PC-3 (cell line): ENCODE measurements at regions of chr5 and their contacts with region 1.

Region 1: GRCh38 chr5:91101600-91102379 is 281.3 kb downstream of the ARRDC3 start:
- DNase-seq: peak; percentile 83
- ATAC-seq: peak; percentile 99
- H3K4me3 ChIP-seq: peak overlapping the region; percentile 30; the same call in 1 of the 2 replicates
- H3K27ac ChIP-seq: no peak overlapping the region
- H3K4me1 ChIP-seq: 0 out of 2 replicates have a peak, but pooled peaks cover 5% of the 10 kb centered on the region
- H3K27me3 ChIP-seq: no peaks in the 10 kb centered on the region
- CTCF ChIP-seq: peak; percentile 94

Region 2: GRCh38 chr5:90866333-90866732 is 235.5 kb before region 1 on chr5:
- CTCF ChIA-PET with region 1: no interaction called
- POLR2A ChIA-PET with region 1: no interaction called
- intact Hi-C with region 1: loop called (anchors 2 kb)
- DNase-seq: peak; percentile 65
- ATAC-seq: peak; percentile 71
- H3K4me3 ChIP-seq: no peak overlapping the region
- H3K27ac ChIP-seq: no peak overlapping the region
- H3K4me1 ChIP-seq: 0 out of 2 replicates have a peak, but pooled peaks cover 4% of the 10 kb centered on the region
- H3K27me3 ChIP-seq: no peaks in the 10 kb centered on the region
- CTCF ChIP-seq: peak; percentile 77

Region 3: DNA sequence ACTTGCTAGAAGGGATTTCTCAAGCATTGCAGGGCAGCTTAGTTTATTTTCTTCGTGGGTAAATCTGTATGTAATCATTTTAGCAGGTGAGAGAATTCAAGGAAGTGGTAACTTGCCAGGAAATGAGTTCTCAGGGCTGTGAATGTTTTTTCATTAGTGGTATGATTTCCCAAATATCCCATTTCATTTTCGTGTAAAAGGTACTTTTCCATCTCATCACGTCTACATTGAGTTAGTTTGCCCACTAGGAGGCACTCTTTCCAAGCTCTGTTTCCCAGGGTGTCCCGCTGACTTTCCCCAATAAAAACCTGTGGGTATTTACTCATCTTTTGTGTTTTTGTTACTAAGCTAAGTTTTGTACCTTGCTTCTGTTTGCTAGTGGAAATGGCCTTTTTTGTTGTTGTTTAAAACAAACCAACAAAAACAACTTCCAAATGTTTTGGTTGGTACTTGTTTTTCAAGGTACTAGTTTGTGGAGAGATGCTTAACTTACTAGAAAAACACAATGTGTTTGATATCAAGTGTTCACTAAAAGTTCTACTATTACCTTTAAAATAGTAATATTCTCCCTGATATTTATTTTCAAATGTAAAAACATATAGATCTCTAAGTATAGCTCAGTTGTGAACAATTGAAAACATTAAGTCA is 169.6 kb before region 1 on chr5:
- CTCF ChIA-PET with region 1: no interaction called
- POLR2A ChIA-PET with region 1: no interaction called
- intact Hi-C with region 1: loop called (anchors 1 kb)
- DNase-seq: peak; percentile 93
- ATAC-seq: peak; percentile 80
- H3K4me3 ChIP-seq: no peak overlapping the region
- H3K27ac ChIP-seq: peak overlapping the region; percentile 20
- H3K4me1 ChIP-seq: peaks cover 24% of the 10 kb centered on the region
- H3K27me3 ChIP-seq: no peaks in the 10 kb centered on the region
- CTCF ChIP-seq: peak; percentile 94

Region 4: GRCh38 chr5:91162534-91163381 is 61.0 kb after region 1 on chr5:
- CTCF ChIA-PET with region 1: no interaction called
- POLR2A ChIA-PET with region 1: no interaction called
- intact Hi-C with region 1: loop called (anchors 2 kb)
- DNase-seq: peak; percentile 94
- ATAC-seq: peak; percentile 97
- H3K4me3 ChIP-seq: peak overlapping the region; percentile 31; the same call in 1 of the 2 replicates
- H3K27ac ChIP-seq: peak overlapping the region; percentile 96
- H3K4me1 ChIP-seq: peaks cover 53% of the 10 kb centered on the region
- H3K27me3 ChIP-seq: no peaks in the 10 kb centered on the region
- CTCF ChIP-seq: no peak

Region 5: GRCh38 chr5:91225848-91226686 is 124.3 kb after region 1 on chr5:
- CTCF ChIA-PET with region 1: no interaction called
- POLR2A ChIA-PET with region 1: no interaction called
- intact Hi-C with region 1: loop called (anchors 1 kb)
- DNase-seq: peak; percentile 66
- ATAC-seq: peak; percentile 78
- H3K4me3 ChIP-seq: no peak overlapping the region
- H3K27ac ChIP-seq: no peak overlapping the region
- H3K4me1 ChIP-seq: no peaks in the 10 kb centered on the region
- H3K27me3 ChIP-seq: no peaks in the 10 kb centered on the region
- CTCF ChIP-seq: peak; percentile 77

Region 6: DNA sequence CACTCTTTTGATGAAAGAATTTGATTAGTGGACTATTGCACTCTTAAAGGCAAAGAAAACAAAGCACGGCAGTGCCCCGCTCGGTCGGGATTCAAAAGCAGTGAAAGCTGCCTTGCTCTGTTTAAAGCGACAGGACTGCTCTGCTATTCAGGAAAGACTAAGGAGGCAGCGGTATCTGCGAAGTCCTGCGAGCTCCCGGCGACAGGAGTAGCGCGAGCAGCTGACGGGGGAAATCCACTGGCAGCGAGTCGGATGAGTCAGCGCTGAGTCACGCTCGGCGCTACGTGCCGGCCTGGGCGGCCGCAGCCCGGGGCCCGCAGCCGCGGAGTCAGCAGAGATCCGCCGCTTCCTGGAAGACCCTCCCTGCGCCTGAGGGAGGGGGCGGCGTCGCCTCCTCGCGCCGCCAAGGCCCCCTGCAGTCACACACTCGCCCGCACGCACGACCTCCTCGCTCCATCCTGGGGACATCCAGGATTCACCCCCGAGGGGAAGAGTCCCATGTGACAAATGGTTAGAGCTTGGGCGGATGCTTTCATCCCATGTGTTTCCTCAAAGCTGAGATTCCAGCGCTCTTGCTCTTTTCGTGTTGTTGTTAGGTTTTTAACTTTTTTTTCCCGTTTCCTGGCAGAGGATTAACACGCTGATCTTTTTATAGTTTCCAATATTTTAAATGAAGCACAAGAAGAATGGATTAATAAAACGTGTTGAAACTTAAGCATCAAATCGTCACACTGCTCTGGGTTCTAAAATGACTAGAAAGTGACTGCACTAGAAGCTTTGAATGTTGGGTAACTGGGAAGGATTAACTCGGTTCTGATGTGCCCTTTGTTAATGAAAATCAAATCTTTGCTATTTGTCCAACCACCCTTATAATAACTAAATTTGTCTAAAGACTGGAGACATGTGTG is 178.8 kb after region 1 on chr5:
- CTCF ChIA-PET with region 1: no interaction called
- POLR2A ChIA-PET with region 1: no interaction called
- intact Hi-C with region 1: loop called (anchors 1 kb)
- DNase-seq: peak; percentile 97
- ATAC-seq: peak; percentile 84
- H3K4me3 ChIP-seq: peak overlapping the region; percentile 64
- H3K27ac ChIP-seq: peak overlapping the region; percentile 99
- H3K4me1 ChIP-seq: peaks cover 40% of the 10 kb centered on the region
- H3K27me3 ChIP-seq: no peaks in the 10 kb centered on the region
- CTCF ChIP-seq: no peak

Region 7: DNA sequence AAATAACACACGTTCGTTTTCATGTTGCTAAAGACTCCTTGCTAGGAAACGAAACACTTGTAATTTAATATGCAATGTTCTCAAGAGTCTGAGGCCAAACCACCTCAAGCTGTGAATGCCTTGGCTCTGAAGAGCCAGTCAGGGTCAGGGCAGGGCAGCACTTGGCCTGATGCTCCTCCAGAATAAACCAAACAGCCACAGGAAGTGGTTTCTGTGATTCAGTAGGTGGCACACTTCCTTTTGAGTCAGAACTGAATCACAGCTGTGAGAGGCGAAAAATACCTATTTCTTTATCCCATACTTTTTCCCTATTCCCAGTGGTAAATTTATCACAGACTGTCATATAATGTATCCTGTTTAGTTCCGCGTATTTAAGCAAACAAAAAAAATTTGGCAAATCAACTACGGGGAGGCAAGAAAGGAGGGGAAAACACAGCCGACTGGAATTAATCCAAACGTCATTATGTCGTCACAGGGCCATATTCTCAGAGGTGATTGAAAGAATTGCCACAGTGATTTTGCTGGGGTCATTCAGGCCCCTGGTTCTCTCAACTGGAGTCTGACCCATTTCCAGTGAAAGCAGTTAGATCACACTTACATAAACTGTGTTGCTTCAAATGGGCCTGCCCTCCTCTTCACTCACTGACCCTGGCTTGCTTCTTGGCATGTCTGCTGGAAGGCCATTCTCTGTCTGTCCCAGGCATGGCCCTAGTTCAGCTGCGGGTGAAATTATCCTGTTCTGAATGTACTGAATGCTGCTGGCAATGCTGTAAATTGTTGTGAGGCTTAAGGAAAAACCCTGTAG is 210.1 kb after region 1 on chr5:
- CTCF ChIA-PET with region 1: no interaction called
- POLR2A ChIA-PET with region 1: no interaction called
- intact Hi-C with region 1: loop called (anchors 10 kb)
- DNase-seq: peak; percentile 94
- ATAC-seq: peak; percentile 87
- H3K4me3 ChIP-seq: peak overlapping the region; percentile 17; the same call in 1 of the 2 replicates
- H3K27ac ChIP-seq: peak overlapping the region; percentile 98
- H3K4me1 ChIP-seq: peaks cover 39% of the 10 kb centered on the region
- H3K27me3 ChIP-seq: no peaks in the 10 kb centered on the region
- CTCF ChIP-seq: no peak